CD8-positive, alpha-beta memory T cell (primary cell): ENCODE measurements at regions of chr2 and their contacts with region 1.

Region 1: GRCh38 chr2:240840435-240841080 is 20.5 kb upstream of the KIF1A start:
- DNase-seq: no peak
- H3K4me3 ChIP-seq: no peak overlapping the region
- H3K4me3 Mint-ChIP-seq: no peak overlapping the region
- H3K27ac ChIP-seq: no peak overlapping the region
- H3K27ac Mint-ChIP-seq: no peak overlapping the region
- H3K4me1 ChIP-seq: no peaks in the 10 kb centered on the region
- H3K4me1 Mint-ChIP-seq: no peaks in the 10 kb centered on the region
- H3K27me3 ChIP-seq: peaks cover 3% of the 10 kb centered on the region
- H3K27me3 Mint-ChIP-seq: peaks cover 3 to 12% of the 10 kb centered on the region in 2 donors

Region 2: GRCh38 chr2:240822280-240822847 is 18.2 kb before region 1 on chr2:
- CTCF ChIA-PET with region 1: no interaction called
- POLR2A ChIA-PET with region 1: no interaction called
- DNase-seq: no peak
- H3K4me3 ChIP-seq: no peak overlapping the region
- H3K4me3 Mint-ChIP-seq: peak overlapping the region in 1 of 7 donors; percentile 2
- H3K27ac ChIP-seq: no peak overlapping the region
- H3K27ac Mint-ChIP-seq: no peak overlapping the region
- H3K4me1 ChIP-seq: no peaks in the 10 kb centered on the region
- H3K4me1 Mint-ChIP-seq: peaks cover 7 to 11% (median 9%) of the 10 kb centered on the region in 3 donors
- H3K27me3 ChIP-seq: peaks cover 41% of the 10 kb centered on the region
- H3K27me3 Mint-ChIP-seq: peaks cover 51 to 67% of the 10 kb centered on the region in 2 donors

Region 3: GRCh38 chr2:240851078-240851991 is 10.8 kb after region 1 on chr2:
- CTCF ChIA-PET with region 1: interaction called, 11 read pairs
- POLR2A ChIA-PET with region 1: no interaction called
- DNase-seq: peak; percentile 63 to 84 (median 70)
- H3K4me3 ChIP-seq: no peak overlapping the region
- H3K4me3 Mint-ChIP-seq: peak overlapping the region in 1 of 7 donors; percentile 18
- H3K27ac ChIP-seq: no peak overlapping the region
- H3K27ac Mint-ChIP-seq: no peak overlapping the region
- H3K4me1 ChIP-seq: no peaks in the 10 kb centered on the region
- H3K4me1 Mint-ChIP-seq: no peaks in the 10 kb centered on the region
- H3K27me3 ChIP-seq: no peaks in the 10 kb centered on the region
- H3K27me3 Mint-ChIP-seq: peaks cover 3 to 4% of the 10 kb centered on the region in 2 donors